ENCODE measurements at regions of chr3 and their contacts with region 1.

Region 1: DNA sequence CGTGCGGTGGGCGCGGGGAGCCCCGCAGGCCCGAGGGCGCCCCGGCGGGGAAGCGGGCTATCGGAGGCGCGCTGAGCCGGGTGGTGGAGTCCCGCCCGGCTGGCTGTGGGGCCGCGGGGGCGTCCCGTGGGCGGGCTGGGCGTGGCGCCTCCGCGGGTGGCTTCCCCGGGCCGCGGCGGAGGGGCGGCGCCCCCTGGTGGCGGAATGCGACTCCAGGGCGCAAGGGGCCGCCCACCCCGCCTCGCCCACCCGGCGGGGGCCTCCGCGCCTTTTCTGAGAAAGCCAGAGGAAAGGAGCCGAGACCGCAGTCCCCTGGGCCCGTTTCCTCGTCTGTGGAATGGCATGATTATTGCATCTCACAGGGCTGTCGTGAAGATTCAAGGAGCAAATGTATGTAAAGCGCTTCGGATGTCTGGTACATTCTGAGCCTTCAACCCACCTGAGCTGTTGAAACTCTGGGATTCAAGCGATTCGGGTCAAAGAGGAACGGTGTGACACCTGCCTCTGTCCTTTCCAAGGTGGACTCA is 31.9 kb upstream of the RAB6B start:
- DNase-seq: peak; percentile 85

Region 2: GRCh38 chr3:133717424-133717823 is 210.2 kb before region 1 on chr3:
- intact Hi-C with region 1: no loop called
- DNase-seq: no peak

Region 3: GRCh38 chr3:133821767-133822638 is 105.6 kb before region 1 on chr3:
- intact Hi-C with region 1: loop called in 1 of 2 experiments (anchors 2 kb)
- DNase-seq: peak; percentile 83

Region 4: GRCh38 chr3:134002306-134002705 is 74.7 kb after region 1 on chr3:
- intact Hi-C with region 1: no loop called
- DNase-seq: no peak